ENCODE measurements at regions of chr3 and their contacts with region 1.

Region 1: DNA sequence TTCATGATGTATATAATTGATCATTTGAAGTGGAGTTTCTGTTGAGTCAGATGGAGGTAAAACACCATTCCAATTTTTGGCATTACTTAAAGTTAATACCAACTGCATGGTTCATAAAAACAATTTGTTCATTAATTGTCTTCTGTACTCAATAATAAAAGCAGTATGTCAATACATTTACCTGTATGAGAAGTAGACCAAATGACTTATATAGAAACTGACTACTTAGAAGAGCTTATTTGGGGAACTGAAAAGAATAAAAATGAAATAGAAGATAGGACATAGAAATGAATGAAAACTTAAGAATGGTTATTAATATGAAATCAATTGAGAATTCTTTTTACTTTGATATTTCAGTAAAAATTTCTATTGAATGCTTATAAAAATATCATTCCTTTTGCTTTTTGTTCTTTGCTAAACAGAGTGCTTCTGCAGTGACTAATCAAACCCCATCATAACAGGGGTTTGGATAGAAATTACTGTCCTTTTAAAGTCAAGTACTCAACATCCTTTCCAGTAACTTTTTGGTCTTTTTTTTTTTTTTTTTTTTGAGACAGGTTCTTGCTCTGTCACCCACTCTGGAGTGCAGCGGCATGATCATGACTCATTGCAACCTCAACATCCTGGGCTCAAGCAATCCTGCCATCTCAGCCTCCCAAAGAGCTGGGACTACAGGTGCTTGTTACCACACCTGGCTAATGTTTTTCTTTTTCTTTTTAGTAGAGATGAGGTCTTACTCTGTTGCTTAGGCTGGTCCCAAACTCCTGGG is 6.5 kb upstream of the CRYBG3 start:
- DNase-seq: peak; percentile 32
- H3K4me3 Mint-ChIP-seq: no peak overlapping the region
- H3K27ac Mint-ChIP-seq: no peak overlapping the region
- H3K4me1 Mint-ChIP-seq: no peaks in the 10 kb centered on the region
- H3K27me3 Mint-ChIP-seq: no peaks in the 10 kb centered on the region
- CTCF ChIP-seq: no peak

Region 2: DNA sequence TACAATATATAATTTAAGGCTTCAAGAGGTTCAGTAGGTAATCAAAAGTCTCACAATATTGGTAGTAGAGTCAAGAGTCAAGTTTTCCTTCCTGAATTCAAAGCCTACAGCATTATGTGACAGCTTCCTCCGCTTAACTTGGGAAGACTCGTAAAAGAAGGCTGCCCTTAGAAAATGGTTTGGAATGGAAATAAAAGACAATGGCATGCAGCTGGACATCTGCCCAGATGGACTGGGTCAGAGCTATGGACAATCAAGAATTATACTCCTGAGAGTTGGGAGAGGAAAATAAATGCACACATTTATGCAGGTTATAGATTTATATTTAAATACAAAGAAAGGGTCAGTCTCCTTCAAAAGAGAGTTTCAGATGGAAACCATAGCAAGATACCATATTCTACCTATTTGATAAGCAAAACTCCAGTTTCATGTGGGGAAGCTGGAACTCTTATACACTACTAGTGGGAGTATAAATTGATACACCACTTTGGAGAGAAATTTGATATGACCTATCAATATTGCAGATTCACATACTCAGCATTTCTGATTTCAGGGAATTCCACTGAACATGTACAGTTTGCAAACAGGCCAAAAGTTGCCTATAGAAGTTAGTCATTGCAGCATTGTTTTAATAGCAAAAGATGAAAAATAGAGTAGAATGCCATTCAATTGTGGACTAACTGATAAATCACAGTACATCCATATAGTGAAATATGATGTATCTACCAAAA is 12.6 kb after region 1 on chr3:
- CTCF ChIA-PET with region 1: interaction called, 11 read pairs
- intact Hi-C with region 1: no loop called
- DNase-seq: no peak
- H3K4me3 Mint-ChIP-seq: no peak overlapping the region
- H3K27ac Mint-ChIP-seq: no peak overlapping the region
- H3K4me1 Mint-ChIP-seq: peaks cover 33% of the 10 kb centered on the region
- H3K27me3 Mint-ChIP-seq: no peaks in the 10 kb centered on the region
- CTCF ChIP-seq: no peak

Region 3: DNA sequence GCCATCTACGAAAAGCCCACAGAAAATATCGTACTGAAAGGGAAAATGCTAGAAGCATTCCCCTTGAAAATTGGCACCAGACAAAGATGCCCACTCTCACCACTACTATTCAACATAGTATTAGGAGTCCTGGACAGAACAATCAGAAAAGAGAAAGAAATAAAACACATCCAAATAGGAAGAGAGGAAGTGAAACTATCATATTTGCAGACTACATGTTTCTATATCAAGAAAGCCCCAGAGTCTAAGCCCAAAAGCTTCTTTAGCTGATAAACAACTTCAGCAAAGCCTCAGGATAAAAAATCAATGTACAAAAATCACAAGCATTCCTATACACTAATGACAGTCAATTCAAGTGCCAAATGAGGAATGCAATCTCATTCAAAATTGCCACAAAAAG is 590.7 kb after region 1 on chr3:
- CTCF ChIA-PET with region 1: no interaction called
- intact Hi-C with region 1: no loop called
- DNase-seq: no peak
- H3K4me3 Mint-ChIP-seq: no peak overlapping the region
- H3K27ac Mint-ChIP-seq: no peak overlapping the region
- H3K4me1 Mint-ChIP-seq: no peaks in the 10 kb centered on the region
- H3K27me3 Mint-ChIP-seq: peaks cover 23% of the 10 kb centered on the region
- CTCF ChIP-seq: no peak

Measured in Calu3 (cell line).